SK-N-SH (cell line): ENCODE measurements at regions of chr12 and their contacts with region 1.

Region 1: DNA sequence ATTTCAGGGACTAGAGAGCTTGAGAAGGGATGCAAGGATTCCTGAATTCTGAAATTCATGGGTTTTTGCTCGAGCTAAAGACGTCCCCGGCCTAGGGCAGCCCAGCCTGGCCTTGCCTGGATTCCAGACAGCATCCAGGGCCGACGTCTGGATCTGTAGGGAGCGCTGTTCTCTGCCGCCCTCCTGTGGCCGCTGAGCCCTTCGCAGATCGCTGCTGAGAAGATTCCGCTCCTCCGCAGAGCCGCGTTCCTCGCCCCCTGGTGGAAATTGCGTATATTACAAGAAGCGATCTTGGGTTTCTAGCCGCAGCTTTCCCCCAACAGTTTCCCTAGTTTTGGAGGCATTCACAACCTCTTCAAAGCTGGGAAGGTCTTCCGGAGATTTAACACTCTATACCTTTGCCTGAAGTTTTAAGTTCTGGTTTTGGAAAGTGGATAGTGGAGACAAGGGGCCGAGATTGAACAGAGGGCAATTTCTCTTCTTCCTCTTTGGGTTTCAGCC is 5.1 kb downstream of the CISTR start:
- DNase-seq: peak; percentile 92
- H3K4me3 ChIP-seq: peak overlapping the region in 1 of 2 experiments; percentile 20; a peak in 1 of 4 replicates
- H3K27ac ChIP-seq: no peak overlapping the region
- H3K4me1 ChIP-seq: peaks cover 0 to 10% of the 10 kb centered on the region in 2 experiments; a peak in 1 of 4 replicates
- H3K27me3 ChIP-seq: peaks cover 78% of the 10 kb centered on the region
- CTCF ChIP-seq: peak; percentile 99
- EP300 ChIP-seq: no peak
- RAD21 ChIP-seq: peak; percentile 87

Region 2: DNA sequence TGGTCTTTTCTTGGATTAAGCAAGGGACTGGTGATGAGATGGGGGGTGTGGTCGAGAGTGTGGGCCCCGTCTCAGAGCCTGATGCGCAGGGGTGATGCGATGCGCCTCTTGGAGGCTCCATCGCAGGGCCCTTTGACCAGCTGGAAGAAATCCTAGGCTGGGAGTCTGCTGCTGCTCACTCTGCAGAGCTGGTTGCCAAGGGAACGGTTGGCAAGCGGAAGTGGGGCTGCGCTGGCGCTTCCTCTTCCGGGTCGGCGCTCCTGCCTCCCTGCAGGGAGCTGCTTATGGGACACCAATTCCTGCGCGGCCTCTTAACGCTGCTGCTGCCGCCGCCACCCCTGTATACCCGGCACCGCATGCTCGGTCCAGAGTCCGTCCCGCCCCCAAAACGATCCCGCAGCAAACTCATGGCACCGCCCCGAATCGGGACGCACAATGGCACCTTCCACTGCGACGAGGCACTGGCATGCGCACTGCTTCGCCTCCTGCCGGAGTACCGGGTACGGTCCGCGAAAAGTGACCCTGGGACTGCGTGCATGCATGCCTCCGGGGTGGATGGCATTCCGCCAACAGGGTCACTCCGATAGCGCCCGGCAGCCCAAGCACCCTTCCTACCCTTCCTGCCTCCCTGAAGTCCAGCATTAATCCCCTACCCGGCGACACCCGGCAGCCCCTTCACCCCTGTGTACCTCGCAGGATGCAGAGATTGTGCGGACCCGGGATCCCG is 447.0 kb before region 1 on chr12 and contains the start of gene MYG1:
- CTCF ChIA-PET with region 1: no interaction called
- POLR2A ChIA-PET with region 1: no interaction called
- DNase-seq: peak; percentile 90
- H3K4me3 ChIP-seq: peak within 1 kb of the TSS; percentile 77
- H3K27ac ChIP-seq: peak within 1 kb of the TSS; percentile 85 to 88
- H3K4me1 ChIP-seq: peaks cover 11 to 26% of the 10 kb centered on the region in 2 experiments
- H3K27me3 ChIP-seq: no peaks in the 10 kb centered on the region
- CTCF ChIP-seq: peak; percentile 24
- EP300 ChIP-seq: no peak
- RAD21 ChIP-seq: no peak
- polyA plus RNA-seq, gene MYG1: 93.5 and 101 TPM in 2 replicates

Region 3: DNA sequence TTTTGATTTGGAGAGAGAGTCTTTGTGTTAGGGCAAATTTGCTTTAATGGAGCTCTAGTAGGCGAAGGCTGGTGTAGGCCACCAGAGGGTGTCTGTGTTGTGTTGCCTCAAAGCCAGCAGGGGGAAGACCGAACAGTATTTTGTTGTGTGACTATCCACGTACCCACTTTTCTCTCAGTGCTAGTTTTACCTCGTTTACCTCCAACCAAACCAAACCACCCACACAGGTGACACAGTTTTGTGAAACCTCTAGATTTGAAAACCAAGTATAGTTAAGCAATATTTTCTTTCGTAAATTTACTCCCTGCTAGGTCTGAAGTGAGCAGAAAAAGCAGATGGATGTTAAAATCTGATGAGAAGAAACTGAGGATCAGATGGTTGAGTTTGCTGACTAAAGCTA is 203.1 kb before region 1 on chr12:
- CTCF ChIA-PET with region 1: interaction called, 21 read pairs
- POLR2A ChIA-PET with region 1: no interaction called
- DNase-seq: peak; percentile 70
- H3K4me3 ChIP-seq: no peak overlapping the region
- H3K27ac ChIP-seq: peak overlapping the region in 1 of 2 experiments; percentile 19; a peak in 1 of 4 replicates
- H3K4me1 ChIP-seq: 0 out of 4 replicates have a peak, but pooled peaks cover 0 to 4% of the 10 kb centered on the region in 2 experiments
- H3K27me3 ChIP-seq: no peaks in the 10 kb centered on the region
- CTCF ChIP-seq: peak; percentile 86
- EP300 ChIP-seq: no peak
- RAD21 ChIP-seq: peak; percentile 89

Region 4: GRCh38 chr12:53591301-53592206 is 155.1 kb before region 1 on chr12:
- CTCF ChIA-PET with region 1: interaction called, 15 read pairs
- POLR2A ChIA-PET with region 1: no interaction called
- DNase-seq: no peak
- H3K4me3 ChIP-seq: peak overlapping the region; percentile 25 to 26; a peak in 3 of 4 replicates
- H3K27ac ChIP-seq: peak overlapping the region; percentile 41 to 82; a peak in 3 of 4 replicates
- H3K4me1 ChIP-seq: peaks cover 17% of the 10 kb centered on the region in 2 experiments
- H3K27me3 ChIP-seq: no peaks in the 10 kb centered on the region
- CTCF ChIP-seq: no peak
- EP300 ChIP-seq: no peak
- RAD21 ChIP-seq: no peak

Region 5: DNA sequence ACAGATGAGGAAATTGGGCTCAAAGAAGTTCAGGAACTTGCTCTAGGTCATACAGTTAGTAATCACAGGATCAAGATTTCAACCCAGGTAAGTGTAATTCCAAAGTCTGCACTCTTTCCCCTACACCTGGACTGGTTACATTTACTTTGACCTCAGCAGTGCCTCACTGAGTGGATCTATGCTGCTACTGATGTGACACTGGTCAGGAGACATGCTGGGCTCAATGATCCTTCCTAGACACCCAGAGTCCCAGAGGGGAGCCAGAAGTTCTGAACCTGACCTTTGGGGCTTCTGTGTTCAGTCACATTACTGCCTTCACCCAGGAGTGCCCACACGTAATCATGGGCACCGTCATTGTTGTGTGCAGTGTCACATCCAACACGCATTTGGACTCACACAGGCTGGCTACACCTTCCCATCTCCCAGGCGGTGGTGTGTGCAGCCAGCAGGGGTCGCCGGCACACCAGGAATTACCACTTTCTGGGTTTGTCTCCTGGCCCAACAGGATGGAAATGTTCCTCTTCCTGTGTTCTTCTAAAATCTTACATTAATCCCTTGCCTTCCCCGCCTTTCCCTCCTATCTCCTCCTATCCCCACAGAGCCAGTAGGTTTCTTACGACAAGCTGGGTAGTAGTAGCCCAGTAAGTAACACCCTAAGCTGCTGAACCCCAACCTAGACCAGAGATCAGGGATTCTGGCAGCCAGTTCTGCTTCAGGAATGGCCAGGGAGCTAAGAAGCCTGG is 45.0 kb before region 1 on chr12:
- CTCF ChIA-PET with region 1: interaction called, 760 read pairs
- POLR2A ChIA-PET with region 1: interaction called, 5 read pairs
- DNase-seq: peak; percentile 80
- H3K4me3 ChIP-seq: no peak overlapping the region; a peak in 1 of 4 replicates
- H3K27ac ChIP-seq: no peak overlapping the region
- H3K4me1 ChIP-seq: no peaks in the 10 kb centered on the region
- H3K27me3 ChIP-seq: peaks cover 79% of the 10 kb centered on the region
- CTCF ChIP-seq: peak; percentile 92
- EP300 ChIP-seq: no peak
- RAD21 ChIP-seq: peak; percentile 95

Region 6: GRCh38 chr12:53727310-53728041 is 19.2 kb before region 1 on chr12 and contains the start of gene CALCOCO1:
- CTCF ChIA-PET with region 1: interaction called, 356 read pairs
- POLR2A ChIA-PET with region 1: interaction called, 5 read pairs
- DNase-seq: peak; percentile 96
- H3K4me3 ChIP-seq: peak within 1 kb of the TSS; percentile 83 to 93
- H3K27ac ChIP-seq: peak within 1 kb of the TSS in 1 of 2 experiments; percentile 79; a peak in 2 of 4 replicates
- H3K4me1 ChIP-seq: peaks cover 5 to 12% of the 10 kb centered on the region in 2 experiments; a peak in 3 of 4 replicates
- H3K27me3 ChIP-seq: peaks cover 6% of the 10 kb centered on the region; the same call in 1 of the 2 replicates
- CTCF ChIP-seq: no peak
- EP300 ChIP-seq: no peak
- RAD21 ChIP-seq: no peak
- polyA plus RNA-seq, gene CALCOCO1: 72.1 and 130 TPM in 2 replicates

Region 7: GRCh38 chr12:53764615-53765014 is 18.0 kb after region 1 on chr12:
- CTCF ChIA-PET with region 1: interaction called, 121 read pairs
- POLR2A ChIA-PET with region 1: no interaction called
- DNase-seq: no peak
- H3K4me3 ChIP-seq: no peak overlapping the region
- H3K27ac ChIP-seq: no peak overlapping the region
- H3K4me1 ChIP-seq: peaks cover 0 to 5% of the 10 kb centered on the region in 2 experiments; a peak in 2 of 4 replicates
- H3K27me3 ChIP-seq: peaks cover 75% of the 10 kb centered on the region
- CTCF ChIP-seq: no peak
- EP300 ChIP-seq: no peak
- RAD21 ChIP-seq: no peak

Region 8: GRCh38 chr12:53938326-53939140 is 191.9 kb after region 1 on chr12 and contains the start of gene HOXC13:
- CTCF ChIA-PET with region 1: interaction called, 16 read pairs
- POLR2A ChIA-PET with region 1: no interaction called
- DNase-seq: peak; percentile 86
- H3K4me3 ChIP-seq: no peak within 1 kb of the TSS; a peak in 1 of 4 replicates
- H3K27ac ChIP-seq: no peak within 1 kb of the TSS
- H3K4me1 ChIP-seq: no peaks in the 10 kb centered on the region; a peak in 1 of 4 replicates
- H3K27me3 ChIP-seq: peaks cover 98% of the 10 kb centered on the region
- CTCF ChIP-seq: no peak
- EP300 ChIP-seq: no peak
- RAD21 ChIP-seq: no peak
- polyA plus RNA-seq, gene HOXC13: not detected in 2 replicates